ENCODE measurements at regions of chr22 and their contacts with region 1.

Region 1: GRCh38 chr22:36065775-36066559 is 37.3 kb upstream of the RBFOX2 start:
- DNase-seq: peak; percentile 95
- H3K4me3 ChIP-seq: peak overlapping the region; percentile 48 to 72 (median 58)
- H3K27ac ChIP-seq: peak overlapping the region; percentile 81 to 91 (median 88)
- H3K4me1 ChIP-seq: peaks cover 6 to 18% (median 14%) of the 10 kb centered on the region in 4 donors
- H3K27me3 ChIP-seq: no peaks in the 10 kb centered on the region
- CTCF ChIP-seq: peak in 2 of 3 experiments; percentile 99 to 100
- EP300 ChIP-seq: no peak
- POLR2A ChIP-seq: no peak

Region 2: GRCh38 chr22:35930933-35931332 is 135.0 kb before region 1 on chr22:
- intact Hi-C with region 1: loop called (anchors 1 kb)
- DNase-seq: no peak
- H3K4me3 ChIP-seq: no peak overlapping the region
- H3K27ac ChIP-seq: no peak overlapping the region
- H3K4me1 ChIP-seq: peaks cover 7 to 32% (median 26%) of the 10 kb centered on the region in 4 donors
- H3K27me3 ChIP-seq: no peaks in the 10 kb centered on the region
- CTCF ChIP-seq: peak; percentile 72 to 82 (median 74)
- EP300 ChIP-seq: no peak
- POLR2A ChIP-seq: no peak

Region 3: DNA sequence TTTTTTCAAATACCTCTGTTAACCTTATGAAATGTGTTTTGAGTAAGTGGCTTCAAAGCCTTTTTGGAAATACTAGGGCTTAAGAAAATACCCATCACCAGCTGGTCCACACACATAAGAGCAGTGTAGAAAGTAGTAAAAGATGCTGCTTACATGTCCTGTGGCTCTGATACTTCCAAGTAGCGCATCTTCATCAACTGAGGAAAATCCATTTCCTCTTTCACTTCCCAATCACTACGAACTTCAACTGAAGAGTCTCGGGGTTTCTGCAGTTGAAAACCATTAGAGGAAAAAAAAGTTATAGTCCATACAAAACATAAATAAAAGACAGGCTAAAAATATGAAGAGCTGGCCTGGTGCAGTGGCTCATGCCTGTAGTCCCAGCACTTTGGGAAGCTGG is 454.5 kb after region 1 on chr22:
- intact Hi-C with region 1: no loop called
- DNase-seq: no peak
- H3K4me3 ChIP-seq: no peak overlapping the region
- H3K27ac ChIP-seq: no peak overlapping the region
- H3K4me1 ChIP-seq: no peaks in the 10 kb centered on the region
- H3K27me3 ChIP-seq: no peaks in the 10 kb centered on the region
- CTCF ChIP-seq: no peak
- EP300 ChIP-seq: no peak
- POLR2A ChIP-seq: no peak